AG04450 (cell line): ENCODE measurements at regions of chr12 and their contacts with region 1.

Region 1: DNA sequence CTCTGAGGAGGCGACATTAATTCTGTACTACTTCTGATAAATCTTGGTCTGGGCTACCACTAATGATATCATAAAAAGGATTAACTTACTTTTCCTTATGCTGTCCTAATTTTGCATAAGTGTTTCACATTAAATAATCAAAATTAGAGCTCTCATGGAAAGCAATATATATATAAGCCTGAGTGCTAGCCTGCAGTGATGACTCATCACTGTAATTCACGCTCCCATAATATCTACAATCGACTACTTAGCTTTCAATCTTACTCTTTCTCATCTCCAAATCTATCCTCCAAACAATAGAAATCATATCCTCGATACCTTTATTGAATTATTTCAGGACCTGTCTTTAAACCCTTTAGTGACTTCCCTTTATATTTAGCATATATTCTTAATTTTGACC is 701.3 kb downstream of the RERGL start:
- DNase-seq: no peak
- H3K4me3 ChIP-seq: no peak overlapping the region
- H3K27ac ChIP-seq: no peak overlapping the region
- H3K27me3 ChIP-seq: no peaks in the 10 kb centered on the region
- CTCF ChIP-seq: no peak

Region 2: DNA sequence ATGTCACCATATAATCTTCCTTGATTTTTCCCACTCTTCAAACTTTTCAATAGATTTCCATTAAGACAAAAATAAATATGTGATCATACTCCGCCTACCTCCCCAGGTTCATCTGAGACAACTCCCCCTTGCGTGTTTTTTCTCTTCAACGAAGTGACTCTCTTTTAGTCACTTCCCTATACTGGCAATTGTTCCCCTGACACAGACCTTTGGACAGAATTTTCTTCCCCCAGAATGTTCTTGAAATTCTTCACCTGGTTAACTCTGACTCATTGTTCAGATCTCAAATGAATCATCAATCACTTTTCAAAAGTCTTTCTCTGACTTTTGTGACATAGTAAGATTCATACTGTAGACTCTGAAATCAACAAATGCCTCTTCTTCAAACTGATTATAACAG is 55.4 kb before region 1 on chr12:
- CTCF ChIA-PET with region 1: interaction called, 10 read pairs
- POLR2A ChIA-PET with region 1: no interaction called
- DNase-seq: no peak
- H3K4me3 ChIP-seq: no peak overlapping the region
- H3K27ac ChIP-seq: no peak overlapping the region
- H3K27me3 ChIP-seq: no peaks in the 10 kb centered on the region
- CTCF ChIP-seq: no peak

Region 3: GRCh38 chr12:17361222-17361621 is 27.5 kb before region 1 on chr12:
- CTCF ChIA-PET with region 1: no interaction called
- POLR2A ChIA-PET with region 1: no interaction called
- DNase-seq: no peak
- H3K4me3 ChIP-seq: no peak overlapping the region
- H3K27ac ChIP-seq: no peak overlapping the region
- H3K27me3 ChIP-seq: no peaks in the 10 kb centered on the region
- CTCF ChIP-seq: no peak